ENCODE measurements at regions of chr15 and their contacts with region 1.

Region 1: DNA sequence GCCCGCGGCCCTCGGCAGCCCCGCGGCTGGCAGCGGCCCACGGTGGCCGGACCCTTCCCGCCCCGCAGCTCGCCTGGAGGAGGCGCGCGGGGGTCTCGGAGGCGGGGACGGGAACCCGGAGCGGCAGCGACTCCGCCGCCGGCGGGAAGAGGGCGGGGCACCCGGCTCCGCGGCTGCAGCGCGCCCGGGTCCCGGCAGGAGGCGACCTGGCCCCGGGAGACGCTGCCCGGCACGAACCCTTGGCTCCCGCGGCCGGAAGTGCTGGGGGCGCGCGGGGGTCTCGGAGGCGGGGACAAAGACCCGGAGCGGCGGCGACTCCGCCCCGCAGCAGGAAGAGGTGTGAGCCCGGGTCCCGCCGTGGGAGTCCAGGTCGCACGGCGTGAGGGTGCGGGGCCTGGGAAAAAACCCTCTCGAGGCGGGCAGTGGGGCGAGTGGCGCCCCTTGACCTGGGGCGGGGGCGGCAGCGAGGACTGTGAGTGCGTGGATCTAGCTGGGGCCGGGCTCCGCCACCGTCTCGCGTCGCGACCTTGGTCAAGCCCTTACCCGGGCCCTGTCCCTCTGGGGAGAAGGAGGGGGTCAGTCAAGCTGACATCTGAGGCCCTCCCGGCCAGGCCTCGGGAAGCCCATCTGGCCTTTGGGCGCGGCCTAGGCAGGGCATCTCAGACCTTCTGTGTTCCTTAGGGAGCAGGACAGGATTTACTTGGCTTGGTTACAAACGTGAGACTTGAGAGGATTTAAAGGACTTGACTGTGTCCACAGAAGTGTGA is at the start of gene CIB2:
- DNase-seq: peak in 1 of 2 donors; percentile 91
- H3K4me3 ChIP-seq: peak within 1 kb of the TSS; percentile 30
- CTCF ChIP-seq: no peak
- POLR2A ChIP-seq: no peak
- total RNA-seq, gene CIB2: 6.6 to 16.2 (median 10.9) TPM

Region 2: GRCh38 chr15:77810130-77810571 is 321.3 kb before region 1 on chr15:
- intact Hi-C with region 1: no loop called
- DNase-seq: no peak
- H3K4me3 ChIP-seq: no peak overlapping the region
- CTCF ChIP-seq: no peak
- POLR2A ChIP-seq: no peak

Region 3: DNA sequence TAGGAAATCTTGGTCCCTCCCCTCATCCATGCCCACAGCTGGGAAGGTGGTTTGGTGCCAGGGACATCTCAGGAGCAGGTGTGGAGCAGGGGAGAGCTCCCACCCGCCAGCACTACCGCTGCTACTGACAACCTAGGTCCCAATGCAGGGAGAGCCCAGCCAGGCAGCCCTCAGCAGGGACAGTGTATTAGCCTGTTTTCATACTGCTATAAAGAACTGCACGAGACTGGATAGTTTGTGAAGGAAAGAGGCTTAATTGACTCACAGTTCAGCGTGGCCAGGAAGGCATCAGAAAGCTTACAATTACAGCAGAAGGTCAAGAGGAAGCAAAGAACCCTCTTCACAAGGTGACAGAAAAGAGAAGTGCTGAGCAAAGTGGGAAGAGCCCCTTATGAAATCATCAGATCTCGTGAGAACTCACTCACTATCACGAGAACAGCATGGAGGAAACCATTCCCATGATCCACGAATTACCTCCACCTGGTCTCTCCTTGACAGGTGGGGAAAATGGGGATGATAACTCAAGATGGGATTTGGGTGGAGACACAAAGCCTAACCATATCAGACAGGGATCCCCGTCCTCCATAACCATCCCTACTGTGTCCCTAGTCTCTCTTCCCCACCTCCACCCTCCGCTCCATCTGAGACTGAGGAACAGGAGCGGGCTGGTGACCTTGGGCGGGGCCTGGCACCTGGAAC is 272.5 kb before region 1 on chr15:
- intact Hi-C with region 1: no loop called
- DNase-seq: peak in 1 of 2 donors; percentile 68
- H3K4me3 ChIP-seq: no peak overlapping the region
- CTCF ChIP-seq: no peak
- POLR2A ChIP-seq: no peak

Region 4: DNA sequence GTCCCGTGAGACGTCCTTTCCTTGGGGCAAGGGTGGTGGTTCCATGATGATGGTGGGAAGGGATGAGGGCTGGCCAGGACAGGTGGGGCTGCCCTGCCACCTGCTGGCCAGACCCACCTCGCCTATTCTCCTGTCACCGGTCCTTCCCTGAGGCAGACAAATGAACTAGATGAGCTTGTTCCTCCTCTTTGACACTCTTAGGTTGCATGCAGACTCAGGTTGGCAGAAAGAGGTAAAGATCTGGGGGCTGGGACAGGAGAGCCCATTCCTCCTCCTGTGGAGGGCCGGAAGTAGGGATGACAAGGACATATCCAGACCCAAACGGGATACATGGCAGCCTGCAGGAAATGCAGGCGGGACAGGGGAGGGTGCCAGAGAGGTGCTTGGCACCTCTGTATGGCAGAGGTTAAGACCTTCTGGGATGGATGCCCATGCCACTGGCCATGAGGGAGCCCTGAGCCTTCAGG is 64.3 kb after region 1 on chr15:
- intact Hi-C with region 1: loop called (anchors 10 kb)
- DNase-seq: peak in 1 of 2 donors; percentile 76
- H3K4me3 ChIP-seq: no peak overlapping the region
- CTCF ChIP-seq: peak in 1 of 3 donors; percentile 34
- POLR2A ChIP-seq: no peak

Region 5: DNA sequence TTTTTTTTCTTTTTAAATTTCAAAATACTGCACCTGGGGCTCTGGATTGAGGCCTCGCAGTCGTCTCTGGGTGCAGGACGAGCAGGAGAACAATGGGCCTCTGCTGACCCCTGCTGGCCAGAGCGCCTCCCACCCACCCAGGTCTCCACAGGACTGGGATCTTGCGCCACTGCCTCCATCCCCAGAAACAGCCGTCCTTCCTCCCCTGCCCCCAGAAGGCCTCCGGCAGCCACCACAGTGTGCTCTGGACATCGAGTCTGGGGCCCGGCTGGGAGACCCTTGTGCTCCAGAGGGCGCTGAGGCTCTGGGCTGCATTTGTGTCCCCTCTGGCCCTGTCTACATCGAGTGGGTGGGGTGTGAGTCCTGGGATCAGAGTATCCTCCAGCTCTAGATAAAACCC is 109.5 kb after region 1 on chr15:
- intact Hi-C with region 1: loop called (anchors 5 kb)
- DNase-seq: peak; percentile 76 to 98
- H3K4me3 ChIP-seq: no peak overlapping the region
- CTCF ChIP-seq: peak in 2 of 3 donors; percentile 5 to 44
- POLR2A ChIP-seq: no peak

Region 6: DNA sequence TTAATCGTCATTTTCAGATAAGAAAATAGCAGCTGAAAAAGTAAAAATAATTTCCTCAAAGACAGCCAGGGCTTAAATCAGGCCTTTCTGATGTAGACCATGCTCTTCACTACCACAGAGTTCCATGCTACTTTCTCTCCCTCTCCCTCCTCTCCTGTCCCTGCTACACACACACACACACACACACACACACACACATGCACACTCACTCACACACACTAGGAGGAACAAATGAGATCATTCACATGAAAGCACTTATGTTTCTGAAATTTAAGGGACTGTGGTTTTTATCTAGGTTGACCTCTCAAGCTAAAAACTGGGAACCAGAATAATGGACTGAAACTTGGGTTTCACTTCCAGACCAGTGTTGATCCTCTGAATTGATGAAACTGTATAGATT is 404.7 kb after region 1 on chr15:
- intact Hi-C with region 1: no loop called
- DNase-seq: no peak
- H3K4me3 ChIP-seq: no peak overlapping the region
- CTCF ChIP-seq: no peak
- POLR2A ChIP-seq: no peak

Measured in lower leg skin (tissue), 4 donors.